HEK293 (cell line): ENCODE measurements at regions of chr11 and their contacts with region 1.

Region 1: DNA sequence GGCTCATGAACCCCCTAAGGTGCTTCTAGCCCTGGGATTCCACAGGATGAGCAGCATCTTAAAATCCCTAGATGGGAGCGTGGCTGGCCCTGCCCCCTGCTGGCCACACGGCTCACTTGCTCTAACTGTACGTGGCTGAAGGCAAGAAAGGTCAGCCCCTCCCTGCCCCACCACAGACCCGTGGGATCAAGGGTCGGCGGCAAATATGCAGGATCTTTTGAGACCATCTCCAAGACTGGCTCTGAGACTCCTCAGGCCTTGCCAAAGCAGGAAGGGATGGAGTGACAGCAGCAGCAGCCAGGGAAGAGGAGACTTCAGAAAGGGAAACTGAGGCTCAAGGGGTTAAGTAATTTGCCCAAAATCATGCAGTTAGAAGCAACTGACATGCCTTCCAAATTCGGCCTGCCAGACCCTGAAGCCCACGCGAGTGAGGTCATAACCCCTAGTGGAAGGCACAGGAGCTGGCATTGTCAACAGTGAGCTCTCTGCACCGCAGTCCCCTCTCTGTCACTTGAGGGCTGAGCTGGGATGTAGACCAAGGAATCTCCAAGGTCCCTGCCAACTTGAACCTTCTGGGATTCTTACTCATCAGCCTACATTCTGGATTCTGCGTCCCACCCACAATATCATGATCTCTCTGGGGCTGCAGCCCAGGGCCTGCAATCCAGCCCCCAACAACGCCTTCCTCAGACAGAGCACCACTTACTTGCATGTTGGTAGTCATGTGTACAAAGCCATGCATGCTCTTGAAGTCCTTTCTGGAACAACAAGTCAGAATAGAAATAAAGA is 31.4 kb downstream of the CREB3L1 start:
- H3K4me3 ChIP-seq: no peak overlapping the region
- H3K27ac ChIP-seq: no peak overlapping the region
- H3K4me1 ChIP-seq: no peaks in the 10 kb centered on the region
- CTCF ChIP-seq: peak; percentile 79

Region 2: GRCh38 chr11:46278387-46279125 is 30.3 kb before region 1 on chr11:
- CTCF ChIA-PET with region 1: interaction called, 18 read pairs
- POLR2A ChIA-PET with region 1: no interaction called
- H3K4me3 ChIP-seq: peak overlapping the region; percentile 49
- H3K27ac ChIP-seq: no peak overlapping the region
- H3K4me1 ChIP-seq: no peaks in the 10 kb centered on the region; the same call in 1 of the 2 replicates
- CTCF ChIP-seq: no peak

Region 3: GRCh38 chr11:46322759-46323158 is 13.9 kb after region 1 on chr11:
- CTCF ChIA-PET with region 1: interaction called, 32 read pairs
- POLR2A ChIA-PET with region 1: no interaction called
- H3K4me3 ChIP-seq: no peak overlapping the region
- H3K27ac ChIP-seq: no peak overlapping the region
- H3K4me1 ChIP-seq: no peaks in the 10 kb centered on the region
- CTCF ChIP-seq: no peak

Region 4: GRCh38 chr11:46380340-46381047 is 71.7 kb after region 1 on chr11:
- CTCF ChIA-PET with region 1: no interaction called
- POLR2A ChIA-PET with region 1: no interaction called
- H3K4me3 ChIP-seq: peak overlapping the region; percentile 52
- H3K27ac ChIP-seq: peak overlapping the region; percentile 78
- H3K4me1 ChIP-seq: no peaks in the 10 kb centered on the region
- CTCF ChIP-seq: no peak